Calu3 (cell line): ENCODE measurements at regions of chr14 and their contacts with region 1.

Region 1: DNA sequence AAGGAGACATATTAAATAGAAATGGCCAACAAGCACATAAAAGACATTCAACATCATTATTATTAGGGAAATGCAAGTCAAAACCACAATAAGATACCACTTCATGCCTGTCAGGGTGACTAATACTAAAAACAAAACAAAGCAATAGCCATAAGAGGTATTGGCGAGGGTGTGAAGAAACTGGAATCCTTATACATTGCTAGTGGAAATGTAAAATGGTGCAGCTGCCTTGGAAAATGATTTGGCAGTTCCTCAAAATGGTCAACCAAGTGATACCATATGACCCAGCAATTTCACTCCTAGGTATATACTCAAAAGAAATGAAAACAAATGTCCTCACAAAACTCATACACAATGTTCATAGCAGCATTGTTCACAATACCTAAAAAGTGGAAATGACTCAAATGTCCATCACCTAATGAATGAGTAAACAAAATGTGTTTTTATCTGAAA is 27.0 kb downstream of the GPR135 start:
- DNase-seq: no peak
- H3K4me3 Mint-ChIP-seq: no peak overlapping the region
- H3K27ac Mint-ChIP-seq: no peak overlapping the region
- H3K4me1 Mint-ChIP-seq: no peaks in the 10 kb centered on the region
- H3K27me3 Mint-ChIP-seq: no peaks in the 10 kb centered on the region
- CTCF ChIP-seq: no peak

Region 2: GRCh38 chr14:59028476-59029202 is 409.6 kb before region 1 on chr14:
- CTCF ChIA-PET with region 1: no interaction called
- intact Hi-C with region 1: loop called (anchors 5 kb)
- DNase-seq: peak; percentile 68
- H3K4me3 Mint-ChIP-seq: no peak overlapping the region
- H3K27ac Mint-ChIP-seq: no peak overlapping the region
- H3K4me1 Mint-ChIP-seq: peaks cover 8% of the 10 kb centered on the region
- H3K27me3 Mint-ChIP-seq: no peaks in the 10 kb centered on the region
- CTCF ChIP-seq: peak; percentile 59

Region 3: DNA sequence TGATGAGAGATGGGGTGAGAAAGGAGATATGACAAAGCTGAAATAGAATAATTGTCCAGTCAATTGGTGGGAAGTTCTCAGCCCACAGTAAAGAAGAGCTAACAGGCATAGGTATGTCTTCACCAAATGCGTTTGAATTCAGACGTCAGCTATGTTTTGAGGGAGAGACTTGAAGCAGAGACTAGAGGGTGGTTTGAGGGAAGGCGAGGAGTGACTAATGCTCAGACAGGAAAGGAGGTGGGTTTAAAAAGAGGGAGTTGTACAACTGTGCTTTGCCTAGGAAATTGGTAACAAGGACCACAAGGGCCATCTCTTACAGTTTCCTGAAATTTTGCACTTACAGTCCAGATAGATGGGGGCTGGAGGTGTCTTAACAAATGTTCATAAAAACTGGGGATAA is 52.5 kb after region 1 on chr14:
- CTCF ChIA-PET with region 1: no interaction called
- intact Hi-C with region 1: no loop called
- DNase-seq: no peak
- H3K4me3 Mint-ChIP-seq: no peak overlapping the region
- H3K27ac Mint-ChIP-seq: no peak overlapping the region
- H3K4me1 Mint-ChIP-seq: peaks cover 9% of the 10 kb centered on the region
- H3K27me3 Mint-ChIP-seq: no peaks in the 10 kb centered on the region
- CTCF ChIP-seq: no peak